Natural killer cell (primary cell): ENCODE measurements at regions of chr1 and their contacts with region 1.

Region 1: DNA sequence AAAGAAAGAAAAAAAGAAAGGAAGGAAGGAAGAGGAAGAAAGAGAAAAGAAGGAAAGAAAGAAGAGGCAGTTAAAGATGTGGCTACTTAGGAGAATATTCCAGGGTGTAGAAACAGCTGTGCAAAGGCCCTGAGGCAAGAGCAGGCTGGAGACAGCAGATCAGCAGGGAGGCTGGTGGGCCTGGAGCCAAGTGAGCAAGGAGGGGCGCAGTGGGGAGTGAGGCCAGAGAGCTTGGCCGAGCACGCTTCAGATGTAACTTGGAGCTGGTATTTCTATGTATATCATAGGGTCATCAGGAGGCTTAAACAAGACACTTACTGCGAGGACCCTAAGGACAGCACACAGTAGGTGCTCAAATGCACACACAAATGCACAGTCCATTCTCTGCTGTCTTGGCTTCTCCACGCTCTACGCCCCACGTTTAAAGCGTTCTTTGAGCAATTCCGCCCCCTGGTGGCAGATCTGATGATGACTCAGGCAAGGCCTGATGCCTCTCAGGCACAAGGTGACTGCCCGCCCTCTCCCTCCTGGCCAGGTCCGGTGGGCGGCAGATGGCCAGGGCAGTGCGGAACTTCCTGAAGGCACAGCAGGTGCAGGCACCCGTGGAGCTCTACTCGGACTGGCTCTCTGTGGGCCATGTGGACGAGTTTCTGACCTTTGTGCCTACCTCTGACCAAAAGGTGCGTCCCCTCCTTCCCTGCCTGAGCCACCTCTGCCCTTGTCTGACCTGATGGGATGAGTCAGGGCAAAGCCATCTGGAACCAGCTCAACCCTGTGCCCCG is 11.9 kb upstream of the PADI3 start:
- DNase-seq: peak; percentile 81 to 89
- ATAC-seq: peak; percentile 72 to 89 (median 79)
- H3K4me3 ChIP-seq: no peak overlapping the region
- H3K4me3 Mint-ChIP-seq: no peak overlapping the region
- H3K27ac ChIP-seq: no peak overlapping the region
- H3K27ac Mint-ChIP-seq: no peak overlapping the region
- H3K4me1 ChIP-seq: no peaks in the 10 kb centered on the region
- H3K4me1 Mint-ChIP-seq: no peaks in the 10 kb centered on the region
- H3K27me3 ChIP-seq: no peaks in the 10 kb centered on the region
- H3K27me3 Mint-ChIP-seq: peaks cover 0 to 4% of the 10 kb centered on the region in 2 donors
- CTCF ChIP-seq: peak; percentile 89

Region 2: GRCh38 chr1:16954579-16954978 is 282.4 kb before region 1 on chr1:
- intact Hi-C with region 1: loop called (anchors 5 kb)
- DNase-seq: no peak
- ATAC-seq: no peak
- H3K4me3 ChIP-seq: no peak overlapping the region
- H3K4me3 Mint-ChIP-seq: no peak overlapping the region
- H3K27ac ChIP-seq: no peak overlapping the region
- H3K27ac Mint-ChIP-seq: no peak overlapping the region
- H3K4me1 ChIP-seq: peaks cover 5% of the 10 kb centered on the region
- H3K4me1 Mint-ChIP-seq: peaks cover 0 to 5% of the 10 kb centered on the region in 2 donors
- H3K27me3 ChIP-seq: no peaks in the 10 kb centered on the region
- H3K27me3 Mint-ChIP-seq: no peaks in the 10 kb centered on the region
- CTCF ChIP-seq: no peak

Region 3: GRCh38 chr1:17125756-17126237 is 111.2 kb before region 1 on chr1:
- intact Hi-C with region 1: loop called (anchors 1 kb)
- DNase-seq: peak; percentile 80 to 88
- ATAC-seq: peak; percentile 77 to 92 (median 85)
- H3K4me3 ChIP-seq: no peak overlapping the region
- H3K4me3 Mint-ChIP-seq: no peak overlapping the region
- H3K27ac ChIP-seq: no peak overlapping the region
- H3K27ac Mint-ChIP-seq: no peak overlapping the region
- H3K4me1 ChIP-seq: peaks cover 5% of the 10 kb centered on the region
- H3K4me1 Mint-ChIP-seq: peaks cover 0 to 6% of the 10 kb centered on the region in 2 donors
- H3K27me3 ChIP-seq: no peaks in the 10 kb centered on the region
- H3K27me3 Mint-ChIP-seq: peaks cover 5 to 6% of the 10 kb centered on the region in 2 donors
- CTCF ChIP-seq: peak; percentile 89